Mammary epithelial cell (primary cell): ENCODE measurements at regions of chr9 and their contacts with region 1.

Region 1: GRCh38 chr9:96232539-96233241 is 69.3 kb downstream of the HSD17B3 start:
- DNase-seq: peak; percentile 45
- H3K4me3 ChIP-seq: no peak overlapping the region
- H3K27ac ChIP-seq: no peak overlapping the region
- H3K4me1 ChIP-seq: no peaks in the 10 kb centered on the region
- H3K27me3 ChIP-seq: peaks cover 37% of the 10 kb centered on the region
- CTCF ChIP-seq: peak; percentile 95 to 97

Region 2: GRCh38 chr9:96080364-96080763 is 152.3 kb before region 1 on chr9:
- CTCF ChIA-PET with region 1: no interaction called
- dilution Hi-C with region 1: no loop called
- in situ Hi-C with region 1: no loop called
- intact Hi-C with region 1: no loop called
- DNase-seq: peak; percentile 95
- H3K4me3 ChIP-seq: no peak overlapping the region
- H3K27ac ChIP-seq: no peak overlapping the region
- H3K4me1 ChIP-seq: peaks cover 10% of the 10 kb centered on the region
- H3K27me3 ChIP-seq: no peaks in the 10 kb centered on the region
- CTCF ChIP-seq: no peak

Region 3: GRCh38 chr9:96279960-96280359 is 47.3 kb after region 1 on chr9:
- CTCF ChIA-PET with region 1: no interaction called
- dilution Hi-C with region 1: no loop called
- in situ Hi-C with region 1: no loop called
- intact Hi-C with region 1: no loop called
- DNase-seq: peak; percentile 27
- H3K4me3 ChIP-seq: no peak overlapping the region
- H3K27ac ChIP-seq: no peak overlapping the region
- H3K4me1 ChIP-seq: no peaks in the 10 kb centered on the region
- H3K27me3 ChIP-seq: peaks cover 9% of the 10 kb centered on the region
- CTCF ChIP-seq: no peak

Region 4: DNA sequence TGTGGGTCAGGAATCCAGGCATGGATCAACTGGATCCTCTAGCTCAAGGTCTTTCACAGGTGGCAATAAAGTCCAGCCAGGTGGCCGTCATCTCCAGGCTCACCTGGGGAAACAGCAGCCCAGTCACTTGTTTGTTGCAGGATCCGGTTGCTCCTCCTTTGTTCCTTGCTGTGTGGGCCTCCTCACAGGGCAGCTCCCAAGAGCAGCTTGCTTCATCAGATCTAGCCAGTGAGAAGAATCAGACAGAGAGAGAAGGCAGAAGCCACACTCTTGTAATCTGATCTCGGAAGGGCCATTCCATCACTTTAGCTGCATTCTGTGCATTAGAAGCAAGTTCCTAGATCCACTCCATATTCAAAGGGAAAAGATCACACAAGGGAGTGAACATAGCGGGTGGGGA is 72.5 kb after region 1 on chr9:
- CTCF ChIA-PET with region 1: no interaction called
- dilution Hi-C with region 1: no loop called
- in situ Hi-C with region 1: loop called (anchors 5 to 10 kb)
- intact Hi-C with region 1: no loop called
- DNase-seq: no peak
- H3K4me3 ChIP-seq: no peak overlapping the region
- H3K27ac ChIP-seq: no peak overlapping the region
- H3K4me1 ChIP-seq: peaks cover 9% of the 10 kb centered on the region
- H3K27me3 ChIP-seq: peaks cover 24% of the 10 kb centered on the region
- CTCF ChIP-seq: no peak

Region 5: GRCh38 chr9:96317335-96317980 is 84.8 kb after region 1 on chr9:
- CTCF ChIA-PET with region 1: interaction called, 6 read pairs
- dilution Hi-C with region 1: no loop called
- in situ Hi-C with region 1: loop called (anchors 5 to 10 kb)
- intact Hi-C with region 1: loop called (anchors 1 kb)
- DNase-seq: peak; percentile 24
- H3K4me3 ChIP-seq: no peak overlapping the region
- H3K27ac ChIP-seq: no peak overlapping the region
- H3K4me1 ChIP-seq: no peaks in the 10 kb centered on the region
- H3K27me3 ChIP-seq: peaks cover under 1% of the 10 kb centered on the region
- CTCF ChIP-seq: peak; percentile 86 to 96

Region 6: DNA sequence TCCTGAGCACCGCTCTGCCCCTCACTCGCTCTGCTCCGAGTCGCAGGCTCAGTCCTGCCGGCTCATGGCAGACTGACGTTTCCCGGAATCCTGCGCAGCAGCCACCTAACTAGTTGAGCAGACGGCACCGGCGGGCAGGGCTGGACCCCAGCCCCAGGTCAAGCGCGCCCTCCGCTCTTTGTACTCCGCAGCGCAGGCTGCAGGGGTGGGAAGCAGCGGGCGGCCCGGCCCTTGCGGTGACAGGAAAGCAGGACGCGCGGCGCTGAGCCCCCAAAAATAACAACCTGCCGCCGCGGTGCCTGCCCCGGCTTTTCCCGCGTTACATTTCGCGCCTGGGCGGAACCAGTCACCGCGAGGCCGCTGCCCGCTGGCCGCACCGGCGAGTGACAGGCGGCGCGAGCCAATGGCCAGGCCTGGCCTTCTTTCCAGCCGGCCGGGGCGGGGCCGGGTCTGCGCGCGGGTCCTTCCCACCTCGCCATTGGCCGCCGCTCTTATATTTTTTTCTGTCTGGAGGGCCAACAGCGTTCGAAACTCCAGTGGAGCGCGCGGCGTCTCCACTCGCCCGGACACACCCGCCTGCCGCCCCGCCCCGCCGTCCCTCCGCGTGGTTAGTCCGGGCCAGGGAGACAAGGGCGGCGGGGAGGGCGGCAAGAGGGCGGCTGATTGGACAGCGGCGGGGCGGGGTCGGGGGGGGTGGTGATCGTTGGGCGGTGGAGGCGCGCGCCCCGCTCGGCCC is 185.6 kb after region 1 on chr9 and contains the start of gene ZNF367:
- CTCF ChIA-PET with region 1: no interaction called
- dilution Hi-C with region 1: no loop called
- in situ Hi-C with region 1: no loop called
- intact Hi-C with region 1: loop called (anchors 10 kb)
- DNase-seq: peak; percentile 99
- H3K4me3 ChIP-seq: peak within 1 kb of the TSS; percentile 62 to 95 (median 83)
- H3K27ac ChIP-seq: peak within 1 kb of the TSS; percentile 90
- H3K4me1 ChIP-seq: peaks cover 18% of the 10 kb centered on the region
- H3K27me3 ChIP-seq: no peaks in the 10 kb centered on the region
- CTCF ChIP-seq: no peak
- total RNA-seq, gene ZNF367: 1.5 to 7.9 TPM

Region 7: DNA sequence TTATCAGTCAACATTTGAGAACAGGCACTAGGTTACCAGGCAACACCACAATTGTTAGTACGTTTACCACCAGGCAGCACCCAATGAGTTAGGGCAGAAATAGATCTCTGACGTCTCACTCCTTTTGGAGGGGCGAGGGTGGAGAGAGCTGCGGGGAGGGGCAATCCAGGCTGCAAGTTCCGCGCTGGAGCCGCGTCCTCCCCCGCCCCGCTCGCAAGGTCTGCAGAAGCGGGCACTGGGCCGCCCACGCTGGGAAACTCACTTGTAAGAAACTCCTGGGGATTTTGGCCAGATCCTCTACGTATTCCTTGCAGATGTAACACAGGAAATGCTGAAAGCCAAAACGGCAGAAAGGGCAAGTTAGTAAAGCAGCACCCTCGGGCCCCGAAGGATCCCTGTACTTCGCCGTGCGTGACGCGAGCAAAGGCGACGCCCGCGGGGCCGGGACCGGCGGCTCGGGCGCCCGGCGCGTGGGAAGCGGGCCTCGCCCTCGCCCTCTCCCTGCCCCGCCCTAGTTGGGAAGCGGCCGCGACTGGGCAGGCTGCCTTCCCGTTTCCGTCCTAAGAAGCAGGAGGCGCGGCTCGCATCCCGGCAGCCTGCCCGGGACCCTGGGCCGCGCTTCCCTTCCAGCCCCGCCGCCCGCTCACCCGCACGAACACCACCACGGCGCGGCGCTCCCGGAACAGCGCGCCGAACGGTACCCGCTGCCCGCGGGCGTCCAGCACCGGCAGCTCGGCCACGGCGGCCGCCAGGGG is 421.9 kb after region 1 on chr9:
- CTCF ChIA-PET with region 1: no interaction called
- dilution Hi-C with region 1: no loop called
- in situ Hi-C with region 1: no loop called
- intact Hi-C with region 1: loop called (anchors 5 kb)
- DNase-seq: peak; percentile 79
- H3K4me3 ChIP-seq: peak overlapping the region; percentile 48 to 74 (median 66)
- H3K27ac ChIP-seq: peak overlapping the region; percentile 89
- H3K4me1 ChIP-seq: peaks cover 8% of the 10 kb centered on the region
- H3K27me3 ChIP-seq: no peaks in the 10 kb centered on the region
- CTCF ChIP-seq: peak in 1 of 2 donors; percentile 21

Region 8: DNA sequence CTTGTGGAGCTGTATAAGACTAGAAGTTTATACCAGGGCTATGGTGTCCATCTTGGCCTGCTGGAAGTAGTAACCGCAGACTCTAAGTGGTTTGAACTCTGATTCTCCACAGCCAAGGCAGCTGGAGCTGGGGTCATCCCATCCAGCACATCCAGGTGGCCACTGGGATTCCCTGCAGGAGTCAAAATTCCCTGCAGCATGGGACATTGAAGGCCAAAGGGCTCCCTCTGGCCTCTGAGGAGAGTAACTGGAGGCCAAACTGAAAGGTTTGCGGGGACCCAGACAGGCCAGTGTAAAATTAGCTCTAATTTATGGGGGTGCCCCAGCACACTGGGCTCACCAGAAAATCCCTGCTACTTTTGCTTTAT is 434.7 kb after region 1 on chr9:
- CTCF ChIA-PET with region 1: no interaction called
- dilution Hi-C with region 1: no loop called
- in situ Hi-C with region 1: no loop called
- intact Hi-C with region 1: loop called (anchors 2 kb)
- DNase-seq: no peak
- H3K4me3 ChIP-seq: no peak overlapping the region
- H3K27ac ChIP-seq: no peak overlapping the region
- H3K4me1 ChIP-seq: no peaks in the 10 kb centered on the region
- H3K27me3 ChIP-seq: no peaks in the 10 kb centered on the region
- CTCF ChIP-seq: no peak